Activated B cell treated with CpG ODN at 0.5 μM for 24 hours (primary cell): ENCODE measurements at regions of chr6 and their contacts with region 1.

Region 1: DNA sequence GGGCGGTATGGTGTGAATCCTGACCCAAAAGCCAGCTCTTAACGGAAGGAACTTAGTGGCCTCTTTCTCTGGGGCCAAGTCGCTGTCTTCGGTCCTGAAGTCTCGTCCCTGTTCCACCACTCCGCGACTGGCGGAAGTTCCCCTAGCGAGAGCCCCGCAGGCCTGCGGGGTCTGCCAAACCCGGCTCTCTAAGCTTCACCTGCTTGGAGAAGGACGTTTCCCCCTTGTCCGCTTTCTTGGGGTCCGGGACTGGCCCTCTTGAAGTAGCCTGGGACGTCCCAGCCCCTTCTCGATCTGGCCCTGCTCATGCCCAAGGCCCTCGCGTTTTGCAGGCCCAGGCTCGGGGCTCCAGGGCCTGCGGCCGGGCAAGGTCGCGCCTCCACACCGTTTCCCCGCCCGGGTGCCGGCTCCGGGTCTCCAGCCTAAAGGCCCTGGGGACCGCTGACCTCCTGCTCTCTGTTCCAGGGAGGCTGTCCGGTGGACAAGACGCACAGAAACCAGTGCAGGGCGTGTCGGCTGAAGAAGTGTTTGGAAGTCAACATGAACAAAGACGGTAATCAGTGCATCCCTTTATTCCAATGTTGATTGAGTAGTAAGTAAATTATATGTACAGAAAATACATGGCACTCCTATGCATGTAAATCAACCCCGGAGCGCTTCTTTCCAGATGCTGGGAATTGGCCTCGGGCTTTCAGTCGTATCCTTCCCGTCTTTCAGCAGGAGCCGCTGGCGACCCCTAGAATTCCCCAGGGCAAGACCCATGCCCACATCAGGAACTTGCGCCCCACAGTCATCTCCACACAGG is 8.8 kb downstream of the NR2E1 start:
- DNase-seq: peak; percentile 28
- ATAC-seq: peak; percentile 57
- H3K4me3 Mint-ChIP-seq: no peak overlapping the region
- H3K27ac Mint-ChIP-seq: no peak overlapping the region
- H3K4me1 Mint-ChIP-seq: peaks cover 26% of the 10 kb centered on the region
- H3K27me3 Mint-ChIP-seq: peaks cover 74% of the 10 kb centered on the region
- CTCF ChIP-seq: no peak

Region 2: GRCh38 chr6:108127826-108128225 is 46.7 kb before region 1 on chr6:
- CTCF ChIA-PET with region 1: no interaction called
- POLR2A ChIA-PET with region 1: no interaction called
- intact Hi-C with region 1: no loop called
- DNase-seq: no peak
- ATAC-seq: no peak
- H3K4me3 Mint-ChIP-seq: no peak overlapping the region
- H3K27ac Mint-ChIP-seq: no peak overlapping the region
- H3K4me1 Mint-ChIP-seq: peaks cover 5% of the 10 kb centered on the region
- H3K27me3 Mint-ChIP-seq: peaks cover 74% of the 10 kb centered on the region
- CTCF ChIP-seq: no peak

Region 3: DNA sequence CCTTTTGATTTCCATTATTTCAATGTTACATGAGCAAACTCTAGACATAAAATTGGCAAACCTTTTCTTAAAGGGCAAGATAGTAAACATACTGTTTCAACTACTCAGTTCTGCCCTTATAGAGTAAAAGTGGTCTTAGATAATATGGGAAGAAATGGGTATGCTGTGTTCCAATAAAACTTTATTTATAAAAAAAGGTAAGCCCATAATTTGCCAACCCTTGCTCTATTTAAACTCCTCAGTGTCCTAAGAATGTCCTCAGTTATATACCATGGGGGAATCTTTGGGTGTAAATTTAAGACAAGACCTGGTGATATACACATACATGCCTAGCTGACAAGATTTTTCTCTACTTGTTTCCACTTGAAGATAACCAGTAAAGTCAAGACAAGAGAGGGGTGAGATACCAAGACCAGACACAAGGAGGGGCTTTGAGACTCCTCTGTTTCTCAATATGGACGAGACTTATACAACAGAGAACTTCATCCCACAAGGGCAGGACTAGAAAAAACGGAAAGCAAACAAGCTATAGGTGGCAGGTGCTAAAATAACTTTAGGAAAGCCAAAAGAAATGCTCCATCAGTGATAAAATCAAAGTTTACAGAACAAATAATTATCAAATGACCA is 75.8 kb after region 1 on chr6:
- CTCF ChIA-PET with region 1: no interaction called
- POLR2A ChIA-PET with region 1: no interaction called
- intact Hi-C with region 1: no loop called
- DNase-seq: no peak
- ATAC-seq: peak; percentile 65
- H3K4me3 Mint-ChIP-seq: no peak overlapping the region
- H3K27ac Mint-ChIP-seq: peak overlapping the region; percentile 5
- H3K4me1 Mint-ChIP-seq: peaks cover 84% of the 10 kb centered on the region
- H3K27me3 Mint-ChIP-seq: no peaks in the 10 kb centered on the region
- CTCF ChIP-seq: no peak

Region 4: GRCh38 chr6:108492131-108492766 is 317.7 kb after region 1 on chr6:
- CTCF ChIA-PET with region 1: interaction called, 13 read pairs
- POLR2A ChIA-PET with region 1: no interaction called
- intact Hi-C with region 1: loop called (anchors 5 kb)
- DNase-seq: no peak
- ATAC-seq: peak; percentile 40
- H3K4me3 Mint-ChIP-seq: no peak overlapping the region
- H3K27ac Mint-ChIP-seq: no peak overlapping the region
- H3K4me1 Mint-ChIP-seq: no peaks in the 10 kb centered on the region
- H3K27me3 Mint-ChIP-seq: no peaks in the 10 kb centered on the region
- CTCF ChIP-seq: no peak